ENCODE measurements at regions of chr2 and their contacts with region 1.

Region 1: DNA sequence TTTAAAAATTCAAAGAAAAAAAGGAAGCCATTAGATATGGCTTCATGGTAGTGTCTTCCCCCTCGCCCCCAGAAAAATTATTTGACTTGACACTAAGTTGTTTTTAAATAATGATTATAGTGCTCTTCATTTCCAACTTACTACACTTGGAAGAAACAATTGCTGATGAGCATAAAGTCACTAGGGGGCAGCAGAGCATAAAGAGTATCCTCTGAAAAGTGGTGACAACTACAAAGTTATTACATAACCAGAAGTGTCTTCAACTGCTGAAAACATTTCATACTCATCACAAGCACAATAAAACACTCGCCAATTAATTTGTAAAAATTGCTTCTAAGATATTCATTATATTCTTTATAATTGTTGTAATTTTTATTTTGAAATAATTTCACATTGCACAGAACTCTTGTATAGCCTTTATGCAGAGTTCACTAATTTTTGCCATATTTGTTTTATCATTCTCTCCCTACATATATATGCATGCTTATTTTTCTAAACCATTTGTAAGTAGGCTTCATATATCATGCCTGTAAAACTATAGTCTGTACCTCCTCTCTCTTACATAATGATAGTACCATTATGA is 54.9 kb downstream of the EXOC6B start:
- DNase-seq: peak in 1 of 2 donors; percentile 79
- H3K4me3 ChIP-seq: no peak overlapping the region
- CTCF ChIP-seq: peak in 1 of 3 donors; percentile 30
- POLR2A ChIP-seq: no peak

Region 2: DNA sequence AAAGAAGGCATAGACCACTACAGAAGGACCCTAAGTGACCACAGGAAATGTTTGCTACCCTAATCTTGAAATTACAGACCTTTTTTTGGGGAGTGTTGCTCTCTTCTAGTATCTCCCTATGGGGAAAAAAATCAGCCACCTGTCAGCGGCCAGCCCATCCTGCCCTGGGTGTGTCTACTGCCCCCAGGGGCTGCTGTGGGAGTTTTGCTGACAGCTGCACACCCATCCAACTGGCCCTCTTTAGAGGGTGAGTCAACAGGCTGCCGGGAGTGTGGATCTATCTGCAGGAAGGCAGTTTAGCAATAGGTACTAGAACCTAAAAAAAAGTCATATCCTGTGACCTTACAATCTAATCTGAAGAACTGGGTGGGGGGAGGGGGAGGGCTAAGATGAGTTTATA is 1318.4 kb before region 1 on chr2:
- intact Hi-C with region 1: no loop called
- DNase-seq: no peak
- H3K4me3 ChIP-seq: no peak overlapping the region
- CTCF ChIP-seq: no peak
- POLR2A ChIP-seq: no peak

Region 3: DNA sequence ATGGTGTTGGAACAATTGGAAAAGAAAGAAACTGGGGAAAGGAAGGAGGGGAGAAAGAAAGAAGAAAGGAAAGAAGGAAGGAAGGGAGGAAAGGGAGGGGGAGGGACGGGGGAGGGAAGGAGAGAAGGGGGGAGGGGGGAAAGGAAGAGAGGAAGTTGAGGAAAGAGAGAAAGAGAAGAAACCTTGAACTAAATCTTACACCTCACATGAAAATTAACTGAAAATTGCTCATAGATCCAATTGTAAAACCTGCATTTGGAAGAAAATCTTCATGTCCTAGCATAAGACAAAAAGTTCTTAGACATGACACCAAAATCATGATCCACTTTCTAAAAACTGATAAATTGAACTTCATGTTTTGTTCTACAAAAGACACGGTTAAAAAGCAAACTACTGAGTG is 109.0 kb before region 1 on chr2:
- intact Hi-C with region 1: no loop called
- DNase-seq: no peak
- H3K4me3 ChIP-seq: no peak overlapping the region
- CTCF ChIP-seq: no peak
- POLR2A ChIP-seq: no peak

Region 4: GRCh38 chr2:72862239-72862988 is 91.4 kb after region 1 on chr2:
- intact Hi-C with region 1: loop called (anchors 5 kb)
- DNase-seq: peak; percentile 78 to 97
- H3K4me3 ChIP-seq: no peak overlapping the region
- CTCF ChIP-seq: peak in 1 of 3 donors; percentile 86
- POLR2A ChIP-seq: no peak

Measured in lower leg skin (tissue), 4 donors.